Activated T-helper 2 cell treated with anti-CD3 and anti-CD28 coated beads, Interferon-gamma antibody, Interleukin-2, Interleukin-4, amounts not matched to agents 10 μg/mL and 5 μg/mL and 100 μg/mL, durations not matched to agents 14 hours and 24 hours and 36 hours (primary cell): ENCODE measurements at regions of chr2 and their contacts with region 1.

Region 1: DNA sequence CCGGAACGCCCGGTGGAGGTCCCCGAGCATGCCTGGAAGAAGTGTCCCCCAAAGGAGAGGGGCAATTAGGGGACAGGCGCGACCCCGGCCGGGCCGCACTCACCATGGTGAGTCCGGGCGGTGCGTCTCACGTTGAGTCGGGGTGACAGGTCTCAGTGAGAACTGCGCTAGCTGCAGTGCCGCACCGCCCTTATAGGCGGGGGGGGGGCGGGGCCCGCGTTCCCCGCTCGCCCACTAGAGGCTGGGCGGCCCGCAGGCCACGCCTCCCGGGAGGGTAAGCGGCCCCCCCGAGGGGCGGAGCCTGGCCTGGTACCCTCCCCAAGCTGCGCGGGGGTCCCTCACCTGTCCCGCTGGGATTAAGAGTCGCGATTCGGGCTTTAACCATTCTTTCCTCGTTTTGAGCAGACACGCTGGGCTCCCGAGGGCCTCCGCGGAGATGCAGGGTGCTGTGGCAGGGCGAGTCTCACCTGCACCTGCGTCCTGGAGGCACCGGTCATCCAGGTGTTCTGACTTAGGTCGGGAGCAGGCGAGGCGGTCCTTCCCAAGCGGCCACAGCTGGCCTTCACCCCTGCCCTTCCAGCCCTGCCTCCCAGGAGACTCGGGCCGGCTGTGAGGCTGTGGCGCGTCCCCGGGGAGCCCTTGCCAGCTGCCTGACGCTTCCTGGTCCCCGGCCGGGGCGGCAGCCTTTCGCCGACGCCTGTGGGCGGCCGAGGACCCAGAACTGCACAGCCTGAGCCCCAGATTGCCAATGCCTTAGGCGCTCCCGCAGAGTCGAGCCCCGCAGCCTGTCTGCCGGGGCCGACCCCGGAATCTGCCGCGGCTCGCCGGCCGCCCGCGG is at the start of gene TUBA4A:
- DNase-seq: peak; percentile 84
- H3K4me3 Mint-ChIP-seq: peak within 1 kb of the TSS; percentile 77
- H3K27ac Mint-ChIP-seq: peak within 1 kb of the TSS; percentile 92
- H3K4me1 Mint-ChIP-seq: peaks cover 46% of the 10 kb centered on the region
- H3K27me3 Mint-ChIP-seq: no peaks in the 10 kb centered on the region
- total RNA-seq, gene TUBA4A: 220 and 231 TPM in 2 replicates

Region 2: GRCh38 chr2:219294356-219295351 is 40.7 kb after region 1 on chr2:
- intact Hi-C with region 1: loop called (anchors 2 kb)
- DNase-seq: peak; percentile 85
- H3K4me3 Mint-ChIP-seq: peak overlapping the region; percentile 79
- H3K27ac Mint-ChIP-seq: peak overlapping the region; percentile 87
- H3K4me1 Mint-ChIP-seq: peaks cover 11% of the 10 kb centered on the region
- H3K27me3 Mint-ChIP-seq: peaks cover 1% of the 10 kb centered on the region

Region 3: GRCh38 chr2:219459460-219460311 is 205.7 kb after region 1 on chr2:
- intact Hi-C with region 1: no loop called
- DNase-seq: no peak
- H3K4me3 Mint-ChIP-seq: no peak overlapping the region
- H3K27ac Mint-ChIP-seq: no peak overlapping the region
- H3K4me1 Mint-ChIP-seq: peaks cover 7% of the 10 kb centered on the region
- H3K27me3 Mint-ChIP-seq: no peaks in the 10 kb centered on the region